Activated B cell treated with CpG ODN at 0.5 μM for 24 hours (primary cell): ENCODE measurements at regions of chr1 and their contacts with region 1.

Region 1: DNA sequence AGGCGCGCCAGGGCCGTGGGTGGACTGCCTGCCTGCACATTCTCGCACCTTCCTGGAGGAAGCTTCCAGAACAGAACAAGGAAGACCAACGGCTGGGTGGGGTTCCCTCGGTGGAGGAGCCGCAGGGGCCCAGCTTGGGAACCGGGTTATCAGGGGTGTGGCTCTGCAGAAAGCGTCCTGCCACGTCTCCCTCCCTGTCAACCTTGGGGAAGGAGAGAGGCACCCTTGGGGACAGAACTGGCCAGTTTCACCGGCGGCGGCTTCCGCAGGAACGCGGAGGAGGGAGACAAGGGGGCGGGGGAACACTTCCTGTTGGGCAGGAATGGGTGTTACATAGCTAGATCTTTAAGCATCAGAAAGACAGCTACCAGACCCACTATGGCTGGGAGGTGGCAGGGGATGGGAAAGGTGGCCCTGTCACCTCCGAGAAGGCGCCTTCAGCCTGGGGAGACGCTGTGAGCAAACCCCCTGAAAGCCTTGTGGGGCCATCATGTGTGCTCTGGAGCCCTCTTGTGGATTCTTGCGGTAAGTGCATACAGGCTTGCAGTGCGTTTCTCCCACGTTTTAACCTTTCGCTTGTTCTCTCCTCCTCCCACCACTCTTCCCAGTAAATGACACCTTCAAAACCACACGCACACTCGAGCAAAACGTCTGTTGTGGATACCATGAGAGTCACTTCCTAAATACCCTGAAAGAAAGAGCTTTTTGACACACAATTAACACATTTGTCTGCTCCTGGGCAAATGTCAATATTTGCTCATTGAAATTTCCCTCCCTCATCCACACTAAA is 3.8 kb upstream of the PLEKHA6 start:
- DNase-seq: peak; percentile 54
- ATAC-seq: peak; percentile 91
- H3K4me3 Mint-ChIP-seq: peak overlapping the region; percentile 77
- H3K27ac Mint-ChIP-seq: no peak overlapping the region
- H3K4me1 Mint-ChIP-seq: peaks cover 3% of the 10 kb centered on the region
- H3K27me3 Mint-ChIP-seq: peaks cover 45% of the 10 kb centered on the region
- CTCF ChIP-seq: peak; percentile 19

Region 2: DNA sequence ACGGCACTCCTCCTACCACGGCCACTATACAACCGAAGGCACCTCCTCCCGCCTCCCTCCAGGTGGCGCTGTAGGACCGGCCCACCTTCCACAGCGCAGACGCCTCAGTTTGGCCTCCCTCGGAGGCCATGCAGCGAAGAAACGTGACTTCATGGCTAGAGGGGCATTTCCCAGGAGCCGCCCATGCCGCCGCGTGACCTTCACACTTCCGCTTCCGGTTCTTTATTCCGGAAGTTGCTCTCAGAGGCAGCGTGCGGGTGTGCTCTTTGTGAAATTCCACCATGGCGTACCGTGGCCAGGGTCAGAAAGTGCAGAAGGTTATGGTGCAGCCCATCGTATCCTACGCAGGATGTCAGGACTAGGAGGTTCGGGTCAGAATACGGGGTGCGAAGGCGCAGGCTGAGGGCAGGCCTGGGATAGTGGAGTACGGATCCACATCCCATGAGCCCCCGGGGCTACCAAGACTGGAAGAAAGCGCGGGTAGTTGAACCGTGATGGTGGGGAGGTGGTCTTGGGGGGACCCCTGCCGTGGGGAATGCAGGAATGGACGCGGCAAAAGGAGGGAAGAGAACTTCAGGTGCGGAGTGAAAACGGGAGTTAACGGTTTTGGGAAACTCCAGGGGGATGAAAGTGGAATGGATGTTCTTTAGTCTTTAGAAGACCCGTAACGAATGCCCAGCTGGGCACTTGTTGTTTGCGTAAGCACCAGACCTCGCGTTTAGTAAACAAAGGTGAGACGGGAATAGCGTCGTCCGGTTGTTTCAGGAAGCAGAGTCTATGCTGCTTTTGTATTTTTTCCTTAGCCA is 501.9 kb before region 1 on chr1 and contains the start of gene SNRPE:
- CTCF ChIA-PET with region 1: no interaction called
- POLR2A ChIA-PET with region 1: interaction called, 4 read pairs
- intact Hi-C with region 1: loop called (anchors 1 kb)
- DNase-seq: peak; percentile 92
- ATAC-seq: peak; percentile 98
- H3K4me3 Mint-ChIP-seq: peak within 1 kb of the TSS; percentile 97
- H3K27ac Mint-ChIP-seq: peak within 1 kb of the TSS; percentile 98
- H3K4me1 Mint-ChIP-seq: peaks cover 24% of the 10 kb centered on the region
- H3K27me3 Mint-ChIP-seq: no peaks in the 10 kb centered on the region
- CTCF ChIP-seq: no peak
- total RNA-seq, gene SNRPE: 149 and 156 TPM in 2 replicates

Region 3: GRCh38 chr1:204207136-204207616 is 156.4 kb before region 1 on chr1:
- CTCF ChIA-PET with region 1: interaction called, 13 read pairs
- POLR2A ChIA-PET with region 1: interaction called, 3 read pairs
- intact Hi-C with region 1: no loop called
- DNase-seq: peak; percentile 62
- ATAC-seq: peak; percentile 88
- H3K4me3 Mint-ChIP-seq: no peak overlapping the region
- H3K27ac Mint-ChIP-seq: no peak overlapping the region
- H3K4me1 Mint-ChIP-seq: no peaks in the 10 kb centered on the region
- H3K27me3 Mint-ChIP-seq: peaks cover 23% of the 10 kb centered on the region
- CTCF ChIP-seq: no peak

Region 4: DNA sequence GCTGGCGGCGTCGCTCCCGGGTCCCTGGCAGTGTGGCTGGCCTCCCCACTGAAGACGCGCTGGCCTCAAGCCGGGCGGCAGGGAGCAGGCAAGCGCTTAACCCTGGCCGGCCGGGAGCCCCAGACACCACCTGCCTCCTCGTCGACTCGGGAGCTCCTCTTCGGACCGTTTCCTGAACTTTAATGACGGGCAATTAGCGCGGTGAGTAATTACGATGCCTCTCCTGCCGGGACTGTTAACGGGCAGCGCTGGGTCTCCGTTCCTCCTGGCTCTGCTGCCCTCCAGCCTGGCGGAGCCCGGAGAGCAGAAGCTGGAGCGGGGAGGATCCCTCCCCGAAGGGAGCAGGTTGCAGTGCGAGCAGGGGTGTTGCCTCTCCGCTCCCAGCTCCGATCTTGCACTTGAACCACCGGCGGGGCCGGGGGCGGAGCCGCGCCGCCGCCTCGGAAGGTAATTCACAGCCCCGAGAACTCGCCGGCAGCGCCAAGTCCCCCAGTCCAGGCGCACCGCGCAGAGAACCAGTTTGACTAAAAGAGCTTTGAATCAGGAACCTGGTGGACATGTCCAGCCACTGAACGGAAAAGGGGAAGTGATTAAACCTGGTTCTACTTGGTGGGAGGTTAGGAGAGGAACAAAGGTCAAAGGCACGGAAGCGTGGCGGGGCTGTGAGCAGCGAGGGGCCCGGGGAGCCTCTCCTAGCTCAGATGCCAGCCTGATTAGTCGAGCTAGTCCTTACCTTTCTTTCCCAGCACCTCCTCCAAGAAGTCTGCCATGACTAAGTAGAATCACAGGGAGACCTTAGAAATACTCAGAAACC is 14.5 kb after region 1 on chr1:
- CTCF ChIA-PET with region 1: interaction called, 5 read pairs
- POLR2A ChIA-PET with region 1: interaction called, 4 read pairs
- intact Hi-C with region 1: loop called (anchors 2 kb)
- DNase-seq: peak; percentile 33
- ATAC-seq: peak; percentile 79
- H3K4me3 Mint-ChIP-seq: peak overlapping the region; percentile 79
- H3K27ac Mint-ChIP-seq: no peak overlapping the region
- H3K4me1 Mint-ChIP-seq: peaks cover 13% of the 10 kb centered on the region
- H3K27me3 Mint-ChIP-seq: peaks cover 17% of the 10 kb centered on the region
- CTCF ChIP-seq: no peak